AG04450 (cell line): ENCODE measurements at regions of chr2 and their contacts with region 1.

Region 1: GRCh38 chr2:79660557-79660956 is 147.7 kb downstream of the CTNNA2 start:
- DNase-seq: peak; percentile 3
- H3K4me3 ChIP-seq: no peak overlapping the region
- H3K27ac ChIP-seq: no peak overlapping the region
- H3K27me3 ChIP-seq: no peaks in the 10 kb centered on the region
- CTCF ChIP-seq: peak; percentile 53

Region 2: GRCh38 chr2:79065201-79065600 is 595.4 kb before region 1 on chr2:
- CTCF ChIA-PET with region 1: no interaction called
- POLR2A ChIA-PET with region 1: no interaction called
- DNase-seq: no peak
- H3K4me3 ChIP-seq: no peak overlapping the region
- H3K27ac ChIP-seq: no peak overlapping the region
- H3K27me3 ChIP-seq: no peaks in the 10 kb centered on the region
- CTCF ChIP-seq: no peak

Region 3: GRCh38 chr2:79855264-79856006 is 194.9 kb after region 1 on chr2:
- CTCF ChIA-PET with region 1: interaction called, 20 read pairs
- POLR2A ChIA-PET with region 1: no interaction called
- DNase-seq: no peak
- H3K4me3 ChIP-seq: no peak overlapping the region
- H3K27ac ChIP-seq: no peak overlapping the region
- H3K27me3 ChIP-seq: no peaks in the 10 kb centered on the region
- CTCF ChIP-seq: peak; percentile 57

Region 4: GRCh38 chr2:79860228-79861058 is 199.9 kb after region 1 on chr2:
- CTCF ChIA-PET with region 1: interaction called, 20 read pairs
- POLR2A ChIA-PET with region 1: no interaction called
- DNase-seq: no peak
- H3K4me3 ChIP-seq: no peak overlapping the region
- H3K27ac ChIP-seq: no peak overlapping the region
- H3K27me3 ChIP-seq: no peaks in the 10 kb centered on the region
- CTCF ChIP-seq: peak; percentile 83

Region 5: DNA sequence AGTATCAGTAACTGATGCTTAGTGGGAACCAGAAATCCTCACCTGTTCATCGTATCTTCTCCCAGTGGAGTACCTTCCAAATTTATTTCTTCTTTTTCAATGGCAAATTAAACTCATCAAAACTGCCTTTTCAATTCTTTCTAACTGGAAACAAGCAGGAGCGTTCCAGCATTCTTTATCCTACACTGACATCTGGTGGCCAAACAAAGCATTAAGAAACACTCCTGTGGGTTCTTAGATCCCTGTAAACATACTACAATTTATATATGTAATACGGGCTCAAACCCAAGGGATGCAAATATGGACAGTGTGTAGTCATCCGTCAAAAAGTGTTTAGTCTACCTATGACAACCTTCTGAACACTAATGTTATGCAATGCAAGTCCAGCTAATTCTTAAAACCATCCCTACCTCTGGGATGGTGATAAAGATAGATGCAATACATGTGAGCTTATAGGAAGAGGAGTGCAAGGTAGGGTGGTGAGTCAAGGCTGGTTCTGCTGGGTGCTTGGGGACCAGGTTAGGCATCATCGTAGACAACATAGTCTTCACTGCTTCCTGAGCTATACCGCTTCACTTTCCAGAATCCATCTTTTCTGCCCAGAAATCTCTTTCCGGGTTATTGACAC is 227.3 kb after region 1 on chr2:
- CTCF ChIA-PET with region 1: interaction called, 12 read pairs
- POLR2A ChIA-PET with region 1: no interaction called
- DNase-seq: peak; percentile 42
- H3K4me3 ChIP-seq: no peak overlapping the region
- H3K27ac ChIP-seq: no peak overlapping the region
- H3K27me3 ChIP-seq: no peaks in the 10 kb centered on the region
- CTCF ChIP-seq: peak; percentile 71